BJ (cell line): ENCODE measurements at regions of chr3 and their contacts with region 1.

Region 1: GRCh38 chr3:52188342-52188955 is 9.5 kb upstream of the ALAS1 start:
- DNase-seq: no peak
- H3K4me3 ChIP-seq: no peak overlapping the region
- H3K27me3 ChIP-seq: no peaks in the 10 kb centered on the region; the same call in 1 of the 2 replicates
- CTCF ChIP-seq: no peak

Region 2: DNA sequence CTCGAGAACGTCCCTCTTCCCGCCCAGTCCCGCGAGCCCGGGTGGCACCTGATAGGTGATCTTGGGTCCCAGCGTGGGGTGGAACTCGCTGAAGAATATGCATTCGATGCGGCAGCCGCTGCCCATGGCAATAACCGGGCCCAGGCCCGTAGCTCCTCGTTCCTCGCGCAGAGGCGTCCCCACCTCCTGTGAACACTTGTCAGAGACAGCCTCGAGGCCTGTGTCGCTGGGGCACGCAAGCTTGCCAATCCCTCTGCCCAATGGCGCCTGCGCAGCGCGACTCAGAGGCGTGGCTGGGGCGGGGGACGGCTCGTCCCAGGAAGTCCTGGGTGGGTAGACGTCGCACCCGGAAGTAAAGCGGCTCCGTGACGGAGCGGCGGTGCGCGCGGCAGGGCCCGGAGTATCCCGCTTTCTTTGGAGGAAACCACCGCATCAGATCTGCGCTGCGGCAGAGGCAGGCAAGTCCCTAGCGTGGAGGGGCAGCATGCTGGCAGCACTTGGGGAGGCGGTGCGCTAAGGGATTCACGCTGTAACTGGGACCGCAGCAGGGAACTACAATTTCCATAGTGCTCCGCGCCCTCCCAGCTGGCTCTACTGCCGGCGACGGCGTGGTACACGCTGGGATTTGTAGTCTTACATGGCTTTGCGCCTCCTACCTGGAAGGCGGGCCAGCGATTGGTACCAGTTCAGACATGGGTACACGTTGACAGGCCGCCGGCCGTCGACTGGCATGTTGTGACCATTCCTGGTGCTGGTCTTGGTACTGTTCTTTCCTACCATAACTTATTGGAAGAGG is 1837.7 kb before region 1 on chr3 and contains the starts of genes CYB561D2 and NPRL2:
- CTCF ChIA-PET with region 1: no interaction called
- POLR2A ChIA-PET with region 1: interaction called, 11 read pairs
- DNase-seq: peak; percentile 68
- H3K4me3 ChIP-seq: peak within 1 kb of the TSS; percentile 85
- H3K27me3 ChIP-seq: no peaks in the 10 kb centered on the region
- CTCF ChIP-seq: no peak
- polyA plus RNA-seq, gene CYB561D2: 22.3 and 39.3 TPM in 2 replicates
- polyA plus RNA-seq, gene NPRL2: 31.4 and 45.0 TPM in 2 replicates